ENCODE measurements at regions of chr3 and their contacts with region 1.

Region 1: DNA sequence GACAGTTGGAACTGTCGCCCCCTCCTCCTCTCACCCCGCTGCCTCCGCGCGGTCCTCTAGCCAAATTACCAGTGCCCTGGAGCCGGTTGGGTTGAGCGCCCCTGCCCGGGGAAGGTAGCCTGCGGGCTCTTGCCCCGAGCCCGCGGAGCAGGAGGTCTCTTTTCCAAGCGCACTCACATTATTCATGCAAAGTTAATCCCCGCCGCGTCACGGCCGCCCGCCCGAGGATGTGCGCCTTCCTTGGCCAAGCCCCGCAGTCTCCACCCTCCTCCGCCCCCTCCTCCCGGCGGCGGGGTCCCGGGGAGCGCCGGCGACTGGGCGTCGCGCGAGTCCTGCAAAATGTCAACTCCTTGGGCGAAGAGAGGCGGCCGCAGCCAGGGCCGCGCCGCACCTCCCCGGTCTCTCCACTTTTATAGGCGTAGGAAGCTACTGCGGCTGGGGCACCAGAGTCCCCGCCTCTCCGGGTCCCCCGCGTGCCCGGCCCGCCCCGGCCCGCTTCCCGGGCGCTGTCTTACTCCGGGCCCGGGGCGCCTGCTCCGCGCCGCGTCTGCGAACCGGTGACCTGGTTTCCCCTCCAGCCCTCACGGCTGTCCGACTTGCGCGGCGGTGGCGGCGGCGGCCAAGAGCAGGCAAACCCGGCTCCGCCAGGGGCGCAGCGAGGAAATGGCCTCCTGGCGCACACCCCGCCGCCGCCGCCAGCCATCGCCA is at the start of gene THRB:
- DNase-seq: peak; percentile 76 to 81
- ATAC-seq: peak; percentile 41 to 46
- H3K4me3 ChIP-seq: peak within 1 kb of the TSS; percentile 65 to 89 (median 82)
- H3K27ac ChIP-seq: peak within 1 kb of the TSS; percentile 94 to 99 (median 97)
- H3K4me1 ChIP-seq: peaks cover 31 to 40% of the 10 kb centered on the region in 2 donors
- H3K27me3 ChIP-seq: no peaks in the 10 kb centered on the region
- CTCF ChIP-seq: peak; percentile 17 to 61 (median 50)
- POLR2A ChIP-seq: peak; percentile 75 to 79
- total RNA-seq, gene THRB: 20.1 to 60.0 (median 25.3) TPM

Region 2: DNA sequence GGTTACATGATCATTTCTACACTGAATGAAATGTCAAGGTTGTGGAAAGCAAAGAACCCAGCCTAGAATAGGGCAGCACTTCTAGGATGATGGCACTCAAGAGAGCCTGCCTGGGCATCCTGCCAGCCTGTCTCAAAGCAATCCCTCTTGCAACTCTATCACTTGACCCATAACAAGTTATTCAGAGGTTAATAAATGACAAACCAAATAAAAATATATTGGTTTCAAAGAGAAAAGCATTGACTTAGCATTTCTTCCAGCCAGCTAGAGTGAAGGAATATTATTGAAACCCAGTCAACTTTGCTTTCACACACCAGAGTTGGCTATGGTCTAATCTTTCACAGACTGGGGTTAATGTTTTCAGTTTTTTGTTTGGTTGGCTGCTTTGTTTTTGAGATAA is 1506.2 kb before region 1 on chr3:
- in situ Hi-C with region 1: no loop called
- intact Hi-C with region 1: no loop called
- DNase-seq: no peak
- ATAC-seq: no peak
- H3K4me3 ChIP-seq: no peak overlapping the region
- H3K27ac ChIP-seq: no peak overlapping the region
- H3K4me1 ChIP-seq: no peaks in the 10 kb centered on the region
- H3K27me3 ChIP-seq: no peaks in the 10 kb centered on the region
- CTCF ChIP-seq: no peak
- POLR2A ChIP-seq: no peak

Region 3: DNA sequence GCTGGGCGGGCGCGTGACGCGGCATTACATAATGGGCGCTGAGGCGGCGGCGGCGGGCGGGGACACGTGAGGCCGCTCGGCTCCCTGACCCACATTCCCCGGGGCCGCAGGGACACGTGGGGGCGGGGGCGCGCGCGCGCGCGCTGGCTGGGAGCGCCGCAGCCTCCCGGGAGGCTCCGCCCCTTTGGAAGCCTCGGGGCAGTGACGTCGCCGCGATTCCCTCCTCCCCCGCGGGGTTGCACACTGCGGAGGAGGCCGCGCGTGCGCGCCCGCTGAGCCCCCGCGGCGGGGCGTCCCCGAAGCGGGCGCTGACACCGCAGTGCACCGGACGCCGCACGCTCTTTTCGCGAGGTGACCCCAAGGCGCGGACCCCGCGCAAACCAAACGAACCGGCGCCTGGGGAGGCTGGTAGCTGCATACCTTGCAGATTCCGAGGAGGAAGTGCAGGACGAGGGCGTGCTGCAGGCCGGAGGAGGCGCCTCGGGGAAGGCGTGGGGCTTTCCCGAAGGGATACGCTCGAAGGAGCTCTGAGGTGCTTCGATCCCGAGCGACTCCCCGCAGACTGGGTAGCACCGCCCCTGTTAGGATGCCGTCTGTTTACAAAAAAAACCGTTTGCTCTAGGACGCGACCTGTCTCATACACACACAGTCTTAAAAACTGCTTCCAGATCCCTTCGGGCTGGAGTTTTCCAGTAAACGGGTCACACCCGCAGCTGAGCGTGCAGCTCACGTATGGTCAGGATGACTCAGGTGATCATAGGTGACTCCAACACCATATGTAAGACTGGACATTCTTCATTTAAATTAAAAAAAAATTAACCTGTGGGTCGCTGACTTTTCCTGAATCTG is 548.6 kb before region 1 on chr3:
- in situ Hi-C with region 1: no loop called
- intact Hi-C with region 1: loop called (anchors 5 kb)
- DNase-seq: peak; percentile 95 to 98
- ATAC-seq: peak; percentile 68
- H3K4me3 ChIP-seq: peak overlapping the region; percentile 67 to 91 (median 81)
- H3K27ac ChIP-seq: peak overlapping the region; percentile 90 to 99 (median 95)
- H3K4me1 ChIP-seq: peaks cover 59 to 61% of the 10 kb centered on the region in 2 donors
- H3K27me3 ChIP-seq: no peaks in the 10 kb centered on the region
- CTCF ChIP-seq: peak in 1 of 5 experiments; percentile 6
- POLR2A ChIP-seq: peak; percentile 92 to 97

Region 4: GRCh38 chr3:24196526-24196925 is 298.2 kb before region 1 on chr3:
- in situ Hi-C with region 1: no loop called
- intact Hi-C with region 1: loop called (anchors 5 kb)
- DNase-seq: no peak
- ATAC-seq: no peak
- H3K4me3 ChIP-seq: no peak overlapping the region
- H3K27ac ChIP-seq: peak overlapping the region; percentile 82 to 88 (median 86)
- H3K4me1 ChIP-seq: peaks cover 51 to 73% of the 10 kb centered on the region in 2 donors
- H3K27me3 ChIP-seq: no peaks in the 10 kb centered on the region
- CTCF ChIP-seq: no peak
- POLR2A ChIP-seq: no peak

Region 5: DNA sequence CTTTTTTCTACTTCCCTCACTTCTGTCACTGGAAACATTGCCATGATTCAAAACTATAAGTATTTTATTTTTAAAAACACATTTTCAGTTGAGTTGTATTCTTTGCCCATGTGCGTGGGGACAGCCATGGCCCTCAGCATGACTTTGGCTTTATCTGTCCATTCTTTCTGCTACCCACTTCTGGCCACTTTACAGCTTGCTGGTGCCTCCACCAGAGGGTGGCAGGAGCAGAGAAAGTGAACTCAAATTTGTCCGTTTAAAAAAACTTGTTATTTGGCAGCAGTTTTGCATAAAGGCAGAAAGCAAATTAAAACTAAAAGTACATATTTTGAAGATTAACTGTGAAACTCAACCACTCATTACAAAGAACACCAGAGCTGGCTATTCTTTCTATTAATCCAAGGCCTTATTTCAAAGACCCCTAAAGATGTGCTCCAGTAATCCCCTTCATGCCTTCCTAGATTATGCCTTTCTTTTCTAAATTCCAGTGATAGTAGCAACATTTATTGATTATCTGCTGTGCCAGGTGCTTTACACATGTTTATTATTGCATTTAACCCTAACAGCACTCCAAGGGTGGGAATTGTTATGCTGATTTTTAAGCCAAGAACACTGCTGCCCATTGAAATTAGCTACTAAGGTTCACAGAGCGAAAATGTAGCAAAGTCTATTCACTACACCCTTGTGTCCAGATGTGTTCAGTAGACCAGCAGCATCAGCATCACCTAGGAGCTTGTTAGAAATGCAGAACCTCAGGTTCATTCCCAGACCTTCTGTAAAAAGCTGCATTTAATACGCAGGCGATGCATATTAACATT is 134.9 kb before region 1 on chr3:
- in situ Hi-C with region 1: loop called in 1 of 4 experiments (anchors 10 kb)
- intact Hi-C with region 1: loop called (anchors 5 kb)
- DNase-seq: no peak
- ATAC-seq: no peak
- H3K4me3 ChIP-seq: no peak overlapping the region
- H3K27ac ChIP-seq: no peak overlapping the region
- H3K4me1 ChIP-seq: peaks cover 21 to 23% of the 10 kb centered on the region in 2 donors
- H3K27me3 ChIP-seq: no peaks in the 10 kb centered on the region
- CTCF ChIP-seq: no peak
- POLR2A ChIP-seq: no peak

Region 6: DNA sequence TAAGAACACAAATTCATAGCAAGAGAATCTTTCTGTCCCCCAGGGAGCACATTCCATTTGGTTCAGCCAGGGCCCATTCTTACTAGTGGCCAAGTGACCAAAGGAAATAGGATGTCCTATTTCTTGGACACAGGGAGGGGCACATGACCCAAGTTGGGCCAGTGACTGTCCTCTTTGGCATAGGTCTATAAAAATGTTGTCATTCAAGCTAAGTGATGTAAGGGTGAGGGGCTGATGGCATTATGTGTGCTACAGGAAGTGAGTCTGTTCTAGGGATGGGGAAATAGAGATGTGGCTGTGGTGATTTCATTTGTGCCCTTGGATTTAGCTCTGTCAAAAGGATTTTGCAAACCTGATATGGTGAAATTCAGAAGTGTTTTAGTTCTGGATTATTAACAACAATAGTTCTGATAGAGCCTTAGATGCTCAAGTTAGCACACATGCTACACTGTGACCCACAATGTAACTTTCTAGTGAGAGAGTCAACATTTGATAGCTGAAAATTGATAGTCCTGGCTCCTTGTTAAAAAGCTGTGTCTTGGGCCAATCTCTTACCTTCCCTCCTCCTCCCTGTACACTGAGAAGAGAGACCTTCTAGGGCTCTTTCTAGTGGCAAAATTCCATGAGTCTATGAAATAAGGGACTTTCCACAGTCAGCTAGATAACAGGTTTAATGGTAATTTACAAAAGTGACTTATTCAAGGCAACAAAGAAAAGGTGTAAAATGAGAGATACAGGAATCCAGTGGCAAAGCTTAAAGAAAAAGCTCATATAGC is 117.4 kb before region 1 on chr3:
- in situ Hi-C with region 1: no loop called
- intact Hi-C with region 1: loop called (anchors 2 kb)
- DNase-seq: peak; percentile 17 to 61
- ATAC-seq: peak; percentile 62 to 64
- H3K4me3 ChIP-seq: no peak overlapping the region
- H3K27ac ChIP-seq: peak overlapping the region in 3 of 4 donors; percentile 43 to 76 (median 50)
- H3K4me1 ChIP-seq: peaks cover 55 to 87% of the 10 kb centered on the region in 2 donors
- H3K27me3 ChIP-seq: no peaks in the 10 kb centered on the region
- CTCF ChIP-seq: no peak
- POLR2A ChIP-seq: no peak